H1 (cell line): ENCODE measurements at regions of chr1 and their contacts with region 1.

Region 1: DNA sequence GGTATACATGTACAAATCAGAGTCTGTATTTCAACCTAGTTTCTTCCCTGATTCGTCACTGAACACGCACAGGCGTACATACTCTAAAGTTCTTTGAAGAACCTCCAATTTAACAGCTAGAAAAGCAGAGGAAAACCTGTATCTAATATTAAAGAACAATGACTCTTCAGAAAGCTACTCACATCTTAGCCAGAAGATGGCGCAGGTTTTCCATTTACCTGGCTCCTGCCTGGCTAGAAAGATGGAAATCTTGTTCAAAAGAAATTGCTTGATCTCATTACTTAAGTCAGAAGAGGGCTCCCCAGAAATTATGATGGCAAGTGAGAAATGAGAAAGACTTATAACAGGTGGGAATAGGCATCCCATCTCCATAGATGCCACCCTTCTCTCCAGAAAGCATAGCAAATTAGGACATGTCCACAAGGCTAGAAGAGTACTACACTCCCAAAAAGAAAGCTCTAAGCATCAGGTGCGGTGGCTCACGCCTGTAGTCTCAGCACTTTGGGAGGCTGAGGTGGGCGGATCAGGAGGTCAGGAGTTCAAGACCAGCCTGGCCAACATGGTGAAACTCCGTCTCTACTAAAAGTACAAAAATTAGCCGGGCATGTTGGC is 19.0 kb upstream of the L1TD1 start:
- DNase-seq: peak in 1 of 2 experiments; percentile 71
- H3K4me3 ChIP-seq: 0 out of 8 replicates have a peak overlapping the region, but pooled peaks of 1 of the 4 experiments have one; percentile 3
- H3K27ac ChIP-seq: no peak overlapping the region
- H3K4me1 ChIP-seq: peaks cover 7 to 22% (median 17%) of the 10 kb centered on the region in 4 experiments
- H3K27me3 ChIP-seq: no peaks in the 10 kb centered on the region
- CTCF ChIP-seq: peak in 2 of 3 experiments; percentile 58 to 73; a peak in 2 of 4 replicates
- EP300 ChIP-seq: no peak
- POLR2A ChIP-seq: no peak
- RAD21 ChIP-seq: peak; percentile 90 to 91

Region 2: DNA sequence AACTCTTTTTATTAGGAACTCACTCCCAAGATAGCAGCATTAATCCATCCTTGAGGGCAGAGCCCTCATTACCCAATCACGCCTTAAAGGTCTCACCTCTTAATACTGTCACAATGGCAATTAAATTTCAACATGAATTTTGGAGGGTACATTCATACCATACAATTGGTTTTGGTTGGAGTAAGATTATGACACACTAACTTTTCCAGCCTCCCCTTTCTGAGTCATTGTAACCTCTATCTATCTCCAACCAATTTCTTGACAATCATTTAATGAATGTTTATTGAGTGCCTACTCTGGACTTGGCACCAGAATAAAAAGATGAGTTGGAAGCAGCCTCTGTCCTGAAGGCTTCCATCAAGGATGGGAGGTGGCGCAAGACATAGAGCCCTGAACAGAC is 75.2 kb before region 1 on chr1:
- CTCF ChIA-PET with region 1: no interaction called
- POLR2A ChIA-PET with region 1: no interaction called
- DNase-seq: no peak
- H3K4me3 ChIP-seq: no peak overlapping the region
- H3K27ac ChIP-seq: no peak overlapping the region
- H3K4me1 ChIP-seq: peaks cover 0 to 3% (median 1%) of the 10 kb centered on the region in 4 experiments; a peak in 3 of 7 replicates
- H3K27me3 ChIP-seq: no peaks in the 10 kb centered on the region
- CTCF ChIP-seq: no peak
- EP300 ChIP-seq: no peak
- POLR2A ChIP-seq: no peak
- RAD21 ChIP-seq: no peak

Region 3: DNA sequence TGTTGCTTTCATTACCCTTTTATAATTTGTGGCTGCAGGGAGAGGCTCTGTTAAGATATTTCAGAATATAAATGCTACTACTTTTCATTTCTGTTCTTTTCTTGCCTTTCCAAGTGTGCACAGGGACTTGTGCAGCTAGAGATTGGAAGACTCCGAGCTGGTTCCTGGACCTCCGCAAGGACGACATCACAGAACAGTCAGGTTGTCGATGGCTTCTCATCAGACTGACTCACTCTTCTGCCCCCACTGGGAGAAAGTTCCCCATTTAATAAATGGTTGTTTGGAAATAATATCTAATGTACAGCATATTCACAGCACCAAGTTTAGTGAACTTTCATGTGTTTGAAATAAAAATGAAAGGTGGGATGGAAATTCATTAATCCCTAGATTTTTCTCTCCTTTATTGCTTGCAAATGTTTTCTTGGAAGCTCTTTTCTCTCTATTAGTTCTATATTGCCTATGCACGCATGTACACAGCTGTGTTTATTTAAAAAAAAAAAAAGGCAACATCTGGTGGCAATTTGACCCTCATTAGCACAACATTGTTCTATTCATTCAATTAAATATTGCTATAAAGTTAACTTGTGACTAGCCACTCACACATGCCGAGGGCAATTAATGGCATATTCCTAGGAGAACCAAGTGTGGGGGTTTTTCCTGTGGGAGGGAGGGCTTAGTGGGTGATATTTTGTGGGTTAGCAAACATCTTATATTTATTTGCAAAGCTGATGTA is 58.5 kb before region 1 on chr1:
- CTCF ChIA-PET with region 1: no interaction called
- POLR2A ChIA-PET with region 1: no interaction called
- DNase-seq: no peak
- H3K4me3 ChIP-seq: no peak overlapping the region
- H3K27ac ChIP-seq: no peak overlapping the region
- H3K4me1 ChIP-seq: no peaks in the 10 kb centered on the region
- H3K27me3 ChIP-seq: no peaks in the 10 kb centered on the region
- CTCF ChIP-seq: no peak
- EP300 ChIP-seq: no peak
- POLR2A ChIP-seq: no peak
- RAD21 ChIP-seq: no peak

Region 4: GRCh38 chr1:62194651-62195544 is 19.2 kb after region 1 on chr1 and contains the start of gene L1TD1:
- CTCF ChIA-PET with region 1: interaction called, 30 read pairs
- POLR2A ChIA-PET with region 1: interaction called, 1,232 read pairs
- DNase-seq: peak; percentile 88 to 91
- H3K4me3 ChIP-seq: peak within 1 kb of the TSS; percentile 77 to 100 (median 93)
- H3K27ac ChIP-seq: peak within 1 kb of the TSS; percentile 95
- H3K4me1 ChIP-seq: peaks cover 4 to 19% (median 6%) of the 10 kb centered on the region in 4 experiments
- H3K27me3 ChIP-seq: no peaks in the 10 kb centered on the region
- CTCF ChIP-seq: no peak
- EP300 ChIP-seq: no peak; a peak in 1 of 3 replicates
- POLR2A ChIP-seq: peak; percentile 77 to 96
- RAD21 ChIP-seq: no peak
- total RNA-seq, gene L1TD1: 425 and 441 TPM in 2 replicates

Region 5: GRCh38 chr1:62230709-62231108 is 55.0 kb after region 1 on chr1:
- CTCF ChIA-PET with region 1: interaction called, 23 read pairs
- POLR2A ChIA-PET with region 1: interaction called, 5 read pairs
- DNase-seq: no peak
- H3K4me3 ChIP-seq: no peak overlapping the region
- H3K27ac ChIP-seq: no peak overlapping the region
- H3K4me1 ChIP-seq: peaks cover 6 to 20% (median 11%) of the 10 kb centered on the region in 4 experiments; a peak in 6 of 7 replicates
- H3K27me3 ChIP-seq: no peaks in the 10 kb centered on the region
- CTCF ChIP-seq: no peak
- EP300 ChIP-seq: no peak
- POLR2A ChIP-seq: peak in 1 of 2 experiments; percentile 30; a peak in 1 of 3 replicates
- RAD21 ChIP-seq: no peak

Region 6: GRCh38 chr1:62337706-62338631 is 162.3 kb after region 1 on chr1:
- CTCF ChIA-PET with region 1: interaction called, 11 read pairs
- POLR2A ChIA-PET with region 1: no interaction called
- DNase-seq: peak in 1 of 2 experiments; percentile 64
- H3K4me3 ChIP-seq: no peak overlapping the region; a peak in 1 of 8 replicates
- H3K27ac ChIP-seq: no peak overlapping the region
- H3K4me1 ChIP-seq: peaks cover 0 to 17% (median 6%) of the 10 kb centered on the region in 4 experiments; a peak in 6 of 7 replicates
- H3K27me3 ChIP-seq: no peaks in the 10 kb centered on the region
- CTCF ChIP-seq: peak in 2 of 3 experiments; percentile 33 to 37; a peak in 3 of 4 replicates
- EP300 ChIP-seq: no peak
- POLR2A ChIP-seq: no peak
- RAD21 ChIP-seq: peak in 1 of 2 experiments; percentile 41; a peak in 2 of 4 replicates

Region 7: GRCh38 chr1:62407405-62408009 is 231.8 kb after region 1 on chr1:
- CTCF ChIA-PET with region 1: interaction called, 57 read pairs
- POLR2A ChIA-PET with region 1: interaction called, 5 read pairs
- DNase-seq: no peak
- H3K4me3 ChIP-seq: no peak overlapping the region
- H3K27ac ChIP-seq: no peak overlapping the region
- H3K4me1 ChIP-seq: peaks cover 0 to 5% (median 2%) of the 10 kb centered on the region in 4 experiments; a peak in 4 of 7 replicates
- H3K27me3 ChIP-seq: peaks cover 0 to 3% (median 0%) of the 10 kb centered on the region in 4 experiments; a peak in 1 of 7 replicates
- CTCF ChIP-seq: peak in 2 of 3 experiments; percentile 63 to 74; a peak in 3 of 4 replicates
- EP300 ChIP-seq: no peak
- POLR2A ChIP-seq: no peak
- RAD21 ChIP-seq: peak; percentile 91 to 93